GM12878 (cell line): ENCODE measurements at regions of chr9 and their contacts with region 1.

Region 1: DNA sequence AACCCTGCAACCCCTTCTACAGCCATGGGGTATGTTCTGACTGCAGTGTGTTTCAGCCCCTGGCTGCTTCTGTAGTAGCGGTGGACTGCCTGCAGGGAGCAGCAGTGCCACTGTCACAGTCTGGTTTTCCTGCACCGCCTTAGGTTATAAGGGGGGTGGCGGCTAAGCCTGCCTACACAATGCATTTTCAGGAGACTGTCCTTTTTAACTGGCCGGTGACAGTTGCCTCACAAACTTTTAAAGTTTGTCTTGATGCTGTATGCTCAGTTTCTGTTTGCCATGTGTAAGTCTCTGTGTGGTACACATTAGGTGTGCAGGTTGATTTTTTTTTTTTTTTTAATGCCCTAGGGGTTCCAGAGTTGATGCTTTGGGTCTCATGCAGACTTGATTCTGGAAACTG is 53.0 kb downstream of the NUP214 start:
- DNase-seq: peak; percentile 23
- ATAC-seq: peak; percentile 99
- H3K4me3 ChIP-seq: no peak overlapping the region
- H3K27ac ChIP-seq: no peak overlapping the region
- H3K4me1 ChIP-seq: peaks cover 13% of the 10 kb centered on the region
- H3K27me3 ChIP-seq: no peaks in the 10 kb centered on the region
- CTCF ChIP-seq: peak; percentile 93 to 98 (median 96); a peak in 5 of 6 replicates
- EP300 ChIP-seq: no peak
- POLR2A ChIP-seq: no peak
- RAD21 ChIP-seq: peak; percentile 83

Region 2: GRCh38 chr9:131167146-131167692 is 11.2 kb before region 1 on chr9:
- CTCF ChIA-PET with region 1: interaction called, 4 read pairs
- POLR2A ChIA-PET with region 1: no interaction called
- RAD21 ChIA-PET with region 1: interaction called, 4 read pairs
- SMC1A ChIA-PET with region 1: interaction called, 20 read pairs
- in situ Hi-C with region 1: no loop called
- intact Hi-C with region 1: no loop called
- DNase-seq: no peak
- ATAC-seq: no peak
- H3K4me3 ChIP-seq: no peak overlapping the region
- H3K27ac ChIP-seq: no peak overlapping the region
- H3K4me1 ChIP-seq: no peaks in the 10 kb centered on the region
- H3K27me3 ChIP-seq: no peaks in the 10 kb centered on the region
- CTCF ChIP-seq: no peak
- EP300 ChIP-seq: no peak
- POLR2A ChIP-seq: no peak
- RAD21 ChIP-seq: no peak

Region 3: DNA sequence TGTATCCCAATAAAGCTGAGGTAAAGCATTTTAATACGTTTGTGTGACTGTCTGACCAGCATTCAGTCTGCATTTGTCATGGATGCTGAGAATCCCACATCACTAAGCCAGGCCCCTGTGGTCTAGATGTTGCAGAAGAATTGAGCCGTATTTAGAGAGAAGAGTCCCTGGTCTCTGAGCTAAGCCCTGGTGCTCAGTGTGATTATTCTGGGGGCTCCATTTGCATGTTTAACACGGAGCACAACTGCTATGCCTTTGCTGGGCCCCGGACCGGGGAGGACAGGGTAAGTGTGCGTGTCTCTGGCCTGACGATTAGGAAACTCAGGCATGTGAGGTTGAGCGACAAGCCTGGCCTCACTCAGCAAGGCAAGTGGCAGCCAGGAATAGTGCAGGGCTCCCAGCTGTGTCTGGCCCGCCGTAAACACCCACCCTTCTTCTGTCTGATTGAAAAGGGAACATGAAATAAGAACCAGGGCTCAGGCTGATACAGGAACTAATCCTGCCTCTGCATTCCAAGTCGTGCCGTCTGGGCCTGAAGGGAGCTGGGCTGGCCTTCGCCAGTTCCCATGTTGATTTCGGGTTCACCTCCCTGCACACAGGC is 75.6 kb after region 1 on chr9:
- CTCF ChIA-PET with region 1: interaction called, 10 read pairs
- POLR2A ChIA-PET with region 1: interaction called, 3 read pairs
- RAD21 ChIA-PET with region 1: interaction called, 9 read pairs
- SMC1A ChIA-PET with region 1: interaction called, 4 read pairs
- in situ Hi-C with region 1: no loop called
- intact Hi-C with region 1: no loop called
- DNase-seq: no peak
- ATAC-seq: peak; percentile 4
- H3K4me3 ChIP-seq: no peak overlapping the region
- H3K27ac ChIP-seq: peak overlapping the region; percentile 78
- H3K4me1 ChIP-seq: peaks cover 48% of the 10 kb centered on the region
- H3K27me3 ChIP-seq: no peaks in the 10 kb centered on the region
- CTCF ChIP-seq: no peak
- EP300 ChIP-seq: no peak
- POLR2A ChIP-seq: peak; percentile 65
- RAD21 ChIP-seq: no peak

Region 4: GRCh38 chr9:131277910-131278701 is 99.7 kb after region 1 on chr9:
- CTCF ChIA-PET with region 1: interaction called, 63 read pairs
- POLR2A ChIA-PET with region 1: no interaction called
- RAD21 ChIA-PET with region 1: interaction called, 35 read pairs
- SMC1A ChIA-PET with region 1: interaction called, 3 read pairs
- in situ Hi-C with region 1: no loop called
- intact Hi-C with region 1: loop called (anchors 1 kb)
- DNase-seq: no peak
- ATAC-seq: peak; percentile 37
- H3K4me3 ChIP-seq: peak overlapping the region; percentile 99; the same call in 1 of the 2 replicates
- H3K27ac ChIP-seq: no peak overlapping the region
- H3K4me1 ChIP-seq: peaks cover 9% of the 10 kb centered on the region; the same call in 1 of the 2 replicates
- H3K27me3 ChIP-seq: peaks cover 5 to 6% of the 10 kb centered on the region in 2 experiments; a peak in 3 of 4 replicates
- CTCF ChIP-seq: no peak
- EP300 ChIP-seq: no peak
- POLR2A ChIP-seq: peak; percentile 26; the same call in 1 of the 2 replicates
- RAD21 ChIP-seq: no peak

Region 5: DNA sequence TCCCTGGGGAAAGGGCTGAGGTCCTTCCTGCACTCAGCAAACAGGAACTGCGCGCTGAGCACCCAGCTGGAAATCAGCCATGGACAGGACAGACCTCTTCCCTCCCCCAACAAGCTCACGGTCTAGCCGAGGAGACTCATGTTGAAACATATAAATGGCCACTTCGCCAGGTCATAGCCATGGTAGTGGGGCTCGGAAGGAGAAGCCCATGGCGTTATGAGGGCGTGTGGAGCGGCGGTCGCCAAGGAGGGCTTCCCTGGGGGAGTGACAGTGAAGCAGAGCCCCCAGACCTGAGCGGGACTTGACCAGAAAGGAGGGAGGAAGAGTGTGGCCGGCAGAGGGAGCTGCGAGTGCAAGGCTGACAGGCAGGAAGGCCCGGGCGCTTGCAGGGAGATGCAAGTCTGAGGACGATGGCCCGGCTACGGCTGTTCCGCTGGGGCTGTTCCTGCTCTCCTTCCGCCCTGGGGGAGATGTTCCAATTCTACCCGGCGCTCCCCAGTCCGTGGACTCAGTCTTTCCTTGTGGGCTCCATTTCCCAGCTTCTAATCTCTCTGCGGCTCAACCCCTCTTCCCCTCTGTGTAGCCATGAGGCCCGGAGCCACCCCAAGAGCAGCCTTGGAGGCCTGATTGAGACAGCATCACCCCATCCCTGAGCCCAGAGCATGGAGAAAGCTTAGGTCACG is 171.6 kb after region 1 on chr9:
- CTCF ChIA-PET with region 1: interaction called, 10 read pairs
- POLR2A ChIA-PET with region 1: no interaction called
- RAD21 ChIA-PET with region 1: no interaction called
- SMC1A ChIA-PET with region 1: no interaction called
- in situ Hi-C with region 1: no loop called
- intact Hi-C with region 1: no loop called
- DNase-seq: no peak
- ATAC-seq: peak; percentile 100
- H3K4me3 ChIP-seq: no peak overlapping the region
- H3K27ac ChIP-seq: no peak overlapping the region
- H3K4me1 ChIP-seq: no peaks in the 10 kb centered on the region
- H3K27me3 ChIP-seq: no peaks in the 10 kb centered on the region
- CTCF ChIP-seq: peak; percentile 85 to 91 (median 88)
- EP300 ChIP-seq: no peak
- POLR2A ChIP-seq: no peak
- RAD21 ChIP-seq: peak; percentile 87